Naive thymus-derived CD4-positive, alpha-beta T cell (primary cell): ENCODE measurements at regions of chr19 and their contacts with region 1.

Region 1: GRCh38 chr19:47514869-47515588 is at the start of gene NAPA:
- DNase-seq: peak; percentile 99 to 100 (median 100)
- ATAC-seq: peak; percentile 96
- H3K4me3 ChIP-seq: peak within 1 kb of the TSS; percentile 97
- H3K4me3 Mint-ChIP-seq: peak within 1 kb of the TSS; percentile 81 to 100 (median 98)
- H3K27ac ChIP-seq: peak within 1 kb of the TSS; percentile 100
- H3K27ac Mint-ChIP-seq: peak within 1 kb of the TSS; percentile 81 to 99 (median 98)
- H3K4me1 ChIP-seq: peaks cover 50 to 64% of the 10 kb centered on the region in 2 donors
- H3K4me1 Mint-ChIP-seq: peaks cover 64 to 97% (median 92%) of the 10 kb centered on the region in 7 donors
- H3K27me3 ChIP-seq: no peaks in the 10 kb centered on the region
- H3K27me3 Mint-ChIP-seq: peaks cover 0 to 6% (median 0%) of the 10 kb centered on the region in 5 donors
- total RNA-seq, gene NAPA: 86.2 to 136 (median 107) TPM

Region 2: GRCh38 chr19:47348819-47349795 is 165.9 kb before region 1 on chr19 and contains the start of gene DHX34:
- CTCF ChIA-PET with region 1: no interaction called
- POLR2A ChIA-PET with region 1: no interaction called
- intact Hi-C with region 1: loop called in 1 of 2 experiments (anchors 1 kb)
- DNase-seq: peak; percentile 97 to 100 (median 99)
- ATAC-seq: peak; percentile 100
- H3K4me3 ChIP-seq: peak within 1 kb of the TSS; percentile 92
- H3K4me3 Mint-ChIP-seq: peak within 1 kb of the TSS; percentile 91 to 100 (median 97)
- H3K27ac ChIP-seq: peak within 1 kb of the TSS; percentile 83
- H3K27ac Mint-ChIP-seq: peak within 1 kb of the TSS; percentile 88 to 97 (median 95)
- H3K4me1 ChIP-seq: peaks cover 0 to 12% of the 10 kb centered on the region in 2 donors
- H3K4me1 Mint-ChIP-seq: peaks cover 19 to 46% (median 44%) of the 10 kb centered on the region in 7 donors
- H3K27me3 ChIP-seq: no peaks in the 10 kb centered on the region
- H3K27me3 Mint-ChIP-seq: peaks cover 0 to 3% (median 0%) of the 10 kb centered on the region in 5 donors
- total RNA-seq, gene DHX34: 15.6 to 31.6 (median 29.5) TPM

Region 3: GRCh38 chr19:47447470-47448359 is 67.3 kb before region 1 on chr19:
- CTCF ChIA-PET with region 1: no interaction called
- POLR2A ChIA-PET with region 1: no interaction called
- intact Hi-C with region 1: loop called in 1 of 2 experiments (anchors 1 kb)
- DNase-seq: peak; percentile 47 to 79 (median 55)
- ATAC-seq: peak; percentile 79
- H3K4me3 ChIP-seq: no peak overlapping the region
- H3K4me3 Mint-ChIP-seq: peak overlapping the region; percentile 62 to 82 (median 76)
- H3K27ac ChIP-seq: no peak overlapping the region
- H3K27ac Mint-ChIP-seq: peak overlapping the region in 2 of 9 donors; percentile 31 to 68
- H3K4me1 ChIP-seq: peaks cover 26 to 33% of the 10 kb centered on the region in 2 donors
- H3K4me1 Mint-ChIP-seq: peaks cover 41 to 57% (median 45%) of the 10 kb centered on the region in 7 donors
- H3K27me3 ChIP-seq: peaks cover 3 to 5% of the 10 kb centered on the region in 2 donors
- H3K27me3 Mint-ChIP-seq: peaks cover 22 to 71% (median 53%) of the 10 kb centered on the region in 5 donors

Region 4: DNA sequence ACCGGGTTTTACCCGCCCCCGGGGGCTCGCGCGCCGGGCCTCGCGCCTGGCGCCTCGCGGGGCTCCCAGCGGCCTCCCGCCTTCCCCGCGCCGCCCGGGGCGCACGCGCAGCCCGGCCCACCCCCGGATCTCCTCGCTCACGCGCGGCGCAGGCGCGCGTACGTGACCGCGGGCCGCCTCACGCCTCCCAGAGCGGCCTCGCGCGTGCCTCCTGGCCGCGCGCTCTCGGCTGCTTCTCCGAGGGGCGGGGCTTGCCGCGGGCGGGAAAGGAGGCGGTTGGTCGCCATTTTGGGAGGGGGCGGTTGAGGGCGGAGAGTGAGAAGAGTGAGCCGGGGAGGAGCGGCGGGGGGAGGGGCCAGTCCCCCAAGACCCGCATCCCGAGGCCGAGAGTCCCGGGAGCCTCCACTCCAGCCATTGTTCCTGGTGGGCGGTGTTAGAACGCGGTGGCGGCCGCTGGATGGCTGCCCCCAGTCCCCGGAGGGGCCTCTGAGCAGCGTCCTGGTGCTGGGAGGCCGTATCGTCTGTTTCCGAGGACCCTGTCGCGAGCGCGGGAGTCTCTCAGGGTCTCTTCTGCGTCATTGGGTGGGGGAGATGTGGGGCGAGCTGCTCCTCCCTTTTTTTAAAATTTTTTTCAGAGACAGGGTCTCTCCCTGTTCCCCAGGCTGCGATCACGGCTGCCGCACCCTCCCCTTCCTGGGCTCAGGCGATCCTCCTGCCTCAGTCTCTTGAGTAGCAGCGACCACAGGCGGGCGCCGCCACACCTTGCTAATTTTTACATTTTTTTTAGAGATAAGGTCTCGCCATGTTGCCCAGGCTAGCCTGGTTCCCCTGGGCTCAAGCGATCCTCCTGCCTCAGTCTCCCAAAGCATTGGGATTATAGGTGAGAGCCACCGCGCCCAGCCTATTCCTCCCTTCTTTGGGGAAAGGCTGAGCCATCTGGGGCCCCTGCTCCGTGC is 58.3 kb after region 1 on chr19 and contains the start of gene ZNF541:
- CTCF ChIA-PET with region 1: no interaction called
- POLR2A ChIA-PET with region 1: interaction called, 14 read pairs
- intact Hi-C with region 1: loop called (anchors 1 to 2 kb)
- DNase-seq: peak; percentile 72 to 91 (median 86)
- ATAC-seq: peak; percentile 97
- H3K4me3 ChIP-seq: peak within 1 kb of the TSS; percentile 54
- H3K4me3 Mint-ChIP-seq: peak within 1 kb of the TSS; percentile 44 to 82 (median 73)
- H3K27ac ChIP-seq: peak within 1 kb of the TSS; percentile 69
- H3K27ac Mint-ChIP-seq: peak within 1 kb of the TSS; percentile 17 to 88 (median 59)
- H3K4me1 ChIP-seq: peaks cover 13 to 17% of the 10 kb centered on the region in 2 donors
- H3K4me1 Mint-ChIP-seq: peaks cover 22 to 56% (median 40%) of the 10 kb centered on the region in 7 donors
- H3K27me3 ChIP-seq: no peaks in the 10 kb centered on the region
- H3K27me3 Mint-ChIP-seq: peaks cover 0 to 36% (median 0%) of the 10 kb centered on the region in 5 donors
- total RNA-seq, gene ZNF541: 0.36 to 1.5 (median 0.95) TPM

Region 5: GRCh38 chr19:47608074-47608918 is 93.3 kb after region 1 on chr19:
- CTCF ChIA-PET with region 1: interaction called, 5 read pairs
- POLR2A ChIA-PET with region 1: interaction called, 29 read pairs
- intact Hi-C with region 1: loop called (anchors 1 kb)
- DNase-seq: peak; percentile 91 to 99 (median 96)
- ATAC-seq: peak; percentile 96
- H3K4me3 ChIP-seq: peak overlapping the region; percentile 79
- H3K4me3 Mint-ChIP-seq: peak overlapping the region; percentile 70 to 95 (median 86)
- H3K27ac ChIP-seq: peak overlapping the region; percentile 96
- H3K27ac Mint-ChIP-seq: peak overlapping the region; percentile 61 to 92 (median 88)
- H3K4me1 ChIP-seq: peaks cover 16 to 22% of the 10 kb centered on the region in 2 donors
- H3K4me1 Mint-ChIP-seq: peaks cover 12 to 36% (median 28%) of the 10 kb centered on the region in 7 donors
- H3K27me3 ChIP-seq: no peaks in the 10 kb centered on the region
- H3K27me3 Mint-ChIP-seq: peaks cover 0 to 2% (median 0%) of the 10 kb centered on the region in 5 donors

Region 6: GRCh38 chr19:47778089-47778953 is 263.3 kb after region 1 on chr19 and contains the start of gene SELENOW:
- CTCF ChIA-PET with region 1: no interaction called
- POLR2A ChIA-PET with region 1: no interaction called
- intact Hi-C with region 1: loop called in 1 of 2 experiments (anchors 1 kb)
- DNase-seq: peak; percentile 56 to 86 (median 76)
- ATAC-seq: peak; percentile 95
- H3K4me3 ChIP-seq: peak within 1 kb of the TSS; percentile 88
- H3K4me3 Mint-ChIP-seq: peak within 1 kb of the TSS; percentile 84 to 99 (median 93)
- H3K27ac ChIP-seq: peak within 1 kb of the TSS; percentile 87
- H3K27ac Mint-ChIP-seq: peak within 1 kb of the TSS; percentile 70 to 96 (median 91)
- H3K4me1 ChIP-seq: peaks cover 8 to 19% of the 10 kb centered on the region in 2 donors
- H3K4me1 Mint-ChIP-seq: peaks cover 8 to 40% (median 32%) of the 10 kb centered on the region in 7 donors
- H3K27me3 ChIP-seq: no peaks in the 10 kb centered on the region
- H3K27me3 Mint-ChIP-seq: no peaks in the 10 kb centered on the region
- total RNA-seq, gene SELENOW: 67.5 to 116 (median 101) TPM

Region 7: DNA sequence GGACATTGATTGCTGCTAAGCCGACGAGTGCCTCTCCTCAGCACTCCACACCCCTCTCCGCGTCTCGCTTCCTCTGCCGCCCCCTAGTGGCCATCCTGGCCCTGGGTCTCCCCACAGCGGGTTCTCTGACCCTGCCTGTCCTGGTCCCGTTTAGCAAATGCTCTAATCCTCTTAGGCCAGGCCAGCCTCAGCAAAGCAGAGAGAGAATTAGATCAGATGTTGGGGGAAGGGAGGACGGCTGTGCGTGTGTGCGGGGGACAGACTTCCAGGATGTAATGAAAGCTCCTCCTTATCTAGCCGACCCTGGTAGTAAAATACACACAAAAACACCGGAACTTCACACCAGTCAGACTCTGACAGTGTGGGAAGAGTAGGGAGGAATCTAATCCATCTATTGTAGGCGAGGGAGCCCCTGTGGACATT is 348.5 kb after region 1 on chr19:
- CTCF ChIA-PET with region 1: no interaction called
- POLR2A ChIA-PET with region 1: no interaction called
- intact Hi-C with region 1: no loop called
- DNase-seq: peak; percentile 50 to 87 (median 78)
- ATAC-seq: peak; percentile 91
- H3K4me3 ChIP-seq: no peak overlapping the region
- H3K4me3 Mint-ChIP-seq: no peak overlapping the region
- H3K27ac ChIP-seq: no peak overlapping the region
- H3K27ac Mint-ChIP-seq: peak overlapping the region in 1 of 9 donors; percentile 54
- H3K4me1 ChIP-seq: no peaks in the 10 kb centered on the region
- H3K4me1 Mint-ChIP-seq: no peaks in the 10 kb centered on the region
- H3K27me3 ChIP-seq: no peaks in the 10 kb centered on the region
- H3K27me3 Mint-ChIP-seq: peaks cover 7 to 28% (median 13%) of the 10 kb centered on the region in 5 donors

Region 8: GRCh38 chr19:48452289-48453190 is 937.5 kb after region 1 on chr19:
- CTCF ChIA-PET with region 1: no interaction called
- POLR2A ChIA-PET with region 1: no interaction called
- intact Hi-C with region 1: no loop called
- DNase-seq: no peak
- ATAC-seq: no peak
- H3K4me3 ChIP-seq: no peak overlapping the region
- H3K4me3 Mint-ChIP-seq: no peak overlapping the region
- H3K27ac ChIP-seq: no peak overlapping the region
- H3K27ac Mint-ChIP-seq: no peak overlapping the region
- H3K4me1 ChIP-seq: no peaks in the 10 kb centered on the region
- H3K4me1 Mint-ChIP-seq: peaks cover 16 to 23% (median 17%) of the 10 kb centered on the region in 7 donors
- H3K27me3 ChIP-seq: no peaks in the 10 kb centered on the region
- H3K27me3 Mint-ChIP-seq: no peaks in the 10 kb centered on the region

Region 9: DNA sequence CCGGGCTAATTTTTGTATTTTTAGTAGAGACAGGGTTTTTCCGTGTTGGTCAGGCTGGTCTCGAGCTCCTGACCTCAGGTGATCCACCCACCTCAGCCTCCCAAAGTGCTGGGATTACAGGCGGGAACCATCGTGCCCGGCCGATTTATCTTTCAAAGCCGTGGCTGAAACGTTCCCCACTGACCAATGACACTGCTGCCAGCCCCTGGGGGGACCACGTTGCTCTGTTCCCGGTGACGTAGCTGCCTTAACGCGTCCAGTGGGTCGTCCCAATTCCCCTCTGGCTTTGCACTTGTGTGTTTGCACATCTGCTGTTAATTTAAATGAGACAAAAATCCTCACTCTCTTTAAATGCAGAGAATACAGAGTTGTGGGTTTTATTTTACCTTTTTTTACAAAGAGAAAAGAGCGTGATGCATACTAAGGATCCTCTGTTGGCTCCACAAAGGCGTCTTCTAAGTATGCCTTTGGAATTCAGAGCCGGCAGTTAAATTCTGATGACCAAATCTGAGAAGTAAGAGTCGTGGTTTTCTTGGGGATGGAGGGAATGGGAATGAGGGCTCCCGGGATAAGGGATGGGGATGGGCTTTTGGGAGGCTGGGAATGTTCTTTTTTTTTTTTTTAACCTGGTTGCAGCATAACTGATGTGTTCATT is 1015.2 kb after region 1 on chr19:
- CTCF ChIA-PET with region 1: no interaction called
- POLR2A ChIA-PET with region 1: no interaction called
- intact Hi-C with region 1: no loop called
- DNase-seq: no peak
- ATAC-seq: no peak
- H3K4me3 ChIP-seq: no peak overlapping the region
- H3K4me3 Mint-ChIP-seq: no peak overlapping the region
- H3K27ac ChIP-seq: no peak overlapping the region
- H3K27ac Mint-ChIP-seq: no peak overlapping the region
- H3K4me1 ChIP-seq: no peaks in the 10 kb centered on the region
- H3K4me1 Mint-ChIP-seq: no peaks in the 10 kb centered on the region
- H3K27me3 ChIP-seq: no peaks in the 10 kb centered on the region
- H3K27me3 Mint-ChIP-seq: peaks cover 0 to 9% (median 2%) of the 10 kb centered on the region in 5 donors